Tibial artery (tissue), 4 donors: ENCODE measurements at regions of chr1 and their contacts with region 1.

Region 1: DNA sequence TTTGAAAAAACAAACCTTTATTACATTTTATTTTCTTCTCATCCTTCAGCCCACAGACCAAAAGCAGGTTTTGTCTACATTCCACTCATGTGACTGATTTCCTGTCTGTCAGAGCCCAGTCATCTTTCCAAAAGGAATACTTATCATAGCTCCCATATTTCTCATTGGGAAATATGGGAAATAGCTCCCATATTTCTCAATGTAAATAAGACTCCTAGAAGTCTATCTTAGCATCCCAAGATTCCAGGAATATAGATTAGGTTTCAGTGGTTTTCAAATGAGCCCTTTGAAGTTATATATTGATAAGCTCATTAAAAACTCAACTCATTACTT is 19.1 kb upstream of the NRDC start:
- DNase-seq: no peak
- H3K4me3 ChIP-seq: no peak overlapping the region
- H3K27ac ChIP-seq: no peak overlapping the region
- H3K4me1 ChIP-seq: peaks cover 0 to 6% (median 0%) of the 10 kb centered on the region in 4 donors
- H3K27me3 ChIP-seq: peaks cover 0 to 32% of the 10 kb centered on the region in 2 donors
- CTCF ChIP-seq: no peak

Region 2: DNA sequence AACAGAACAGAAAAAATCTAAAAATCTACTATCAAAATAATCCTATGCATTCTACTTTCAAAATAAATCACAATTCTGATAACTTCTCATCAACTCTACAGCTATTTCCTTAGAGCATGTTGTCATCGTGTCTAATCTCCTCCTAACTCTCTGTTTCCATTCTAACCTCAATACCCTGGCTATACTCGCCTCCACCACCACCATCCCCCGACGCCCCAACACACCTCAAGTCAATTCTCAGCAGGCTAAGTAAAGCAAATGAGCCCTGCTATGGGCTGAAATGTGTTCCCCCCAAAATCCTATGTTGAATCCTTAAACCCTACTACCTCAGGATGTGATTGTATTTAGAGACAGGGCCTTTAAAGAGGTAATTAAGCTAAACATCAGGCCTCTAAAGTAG is 53.7 kb before region 1 on chr1:
- intact Hi-C with region 1: no loop called
- DNase-seq: no peak
- H3K4me3 ChIP-seq: no peak overlapping the region
- H3K27ac ChIP-seq: no peak overlapping the region
- H3K4me1 ChIP-seq: no peaks in the 10 kb centered on the region
- H3K27me3 ChIP-seq: no peaks in the 10 kb centered on the region
- CTCF ChIP-seq: no peak

Region 3: GRCh38 chr1:51871351-51871975 is 26.2 kb before region 1 on chr1:
- intact Hi-C with region 1: no loop called
- DNase-seq: no peak
- H3K4me3 ChIP-seq: no peak overlapping the region
- H3K27ac ChIP-seq: no peak overlapping the region
- H3K4me1 ChIP-seq: peaks cover 0 to 67% (median 21%) of the 10 kb centered on the region in 4 donors
- H3K27me3 ChIP-seq: no peaks in the 10 kb centered on the region
- CTCF ChIP-seq: no peak

Region 4: DNA sequence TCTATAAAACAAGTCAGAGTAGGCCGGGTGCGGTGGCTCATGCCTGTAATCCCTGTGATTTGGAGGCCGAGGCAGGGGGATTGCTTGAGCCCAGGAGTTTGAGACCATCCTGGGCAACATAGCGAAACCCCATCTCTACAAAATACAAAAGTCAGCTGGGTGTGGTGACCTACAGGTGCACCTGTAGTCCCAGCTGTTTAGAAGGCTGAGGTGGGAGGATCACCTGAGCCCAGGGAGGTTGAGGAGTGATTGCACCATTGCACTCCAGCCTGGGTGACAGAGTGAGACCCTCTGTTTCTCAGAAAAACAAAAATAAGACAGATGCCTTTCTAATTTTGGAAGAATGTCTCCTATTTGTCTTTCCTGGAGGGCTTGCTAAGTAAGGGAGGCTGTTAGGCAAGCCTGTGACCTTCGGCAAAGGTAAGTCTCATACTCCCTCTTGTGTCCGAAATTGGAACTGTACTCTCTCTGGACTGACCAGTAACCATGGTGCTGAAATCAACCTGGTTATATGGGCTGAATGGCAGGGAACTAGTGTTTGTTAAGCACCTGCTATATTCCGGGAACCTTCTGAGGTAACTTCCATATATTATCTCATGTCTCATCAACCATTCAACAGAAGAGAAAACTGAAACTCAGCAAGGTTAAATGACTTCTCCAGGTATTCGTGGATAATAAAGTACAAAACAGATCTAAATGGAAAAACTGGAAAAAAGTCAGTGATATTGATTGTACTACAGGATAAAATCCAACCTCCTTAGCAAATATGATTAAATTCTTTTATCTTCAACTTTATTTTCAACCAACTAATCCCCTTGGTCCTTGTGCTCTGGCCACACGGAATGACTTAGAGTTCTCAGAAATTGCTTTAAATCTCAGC is 104.6 kb after region 1 on chr1:
- intact Hi-C with region 1: loop called (anchors 5 kb)
- DNase-seq: peak in 1 of 2 donors; percentile 32
- H3K4me3 ChIP-seq: no peak overlapping the region
- H3K27ac ChIP-seq: no peak overlapping the region
- H3K4me1 ChIP-seq: peaks cover 0 to 9% (median 1%) of the 10 kb centered on the region in 4 donors
- H3K27me3 ChIP-seq: no peaks in the 10 kb centered on the region
- CTCF ChIP-seq: peak; percentile 83 to 93